Panc1 (cell line): ENCODE measurements at regions of chr2 and their contacts with region 1.

Region 1: DNA sequence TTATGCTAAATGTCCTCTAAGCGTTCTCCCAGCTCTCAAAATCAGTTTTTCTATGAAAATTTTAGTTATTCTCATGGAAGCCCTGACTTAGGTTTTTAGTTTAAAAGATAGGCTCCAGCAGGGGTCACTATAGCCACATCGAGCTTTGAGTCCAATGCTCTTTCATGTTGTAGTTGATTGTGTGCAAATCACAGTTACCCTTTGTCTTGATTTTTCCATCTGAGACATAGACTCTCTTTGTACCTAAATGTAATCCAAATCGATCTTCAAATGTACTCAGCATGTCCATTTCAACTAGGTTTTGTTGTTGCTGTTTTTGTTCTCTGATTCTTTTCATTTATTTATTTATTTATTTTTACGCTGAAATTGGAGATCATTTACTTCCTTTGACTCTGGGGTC is 26.4 kb upstream of the MSTN start:
- DNase-seq: peak; percentile 30
- ATAC-seq: peak; percentile 75
- H3K4me3 ChIP-seq: no peak overlapping the region
- H3K27ac ChIP-seq: no peak overlapping the region
- H3K4me1 ChIP-seq: no peaks in the 10 kb centered on the region
- H3K27me3 ChIP-seq: no peaks in the 10 kb centered on the region
- CTCF ChIP-seq: peak; percentile 77; the same call in 1 of the 2 replicates

Region 2: GRCh38 chr2:189798312-189799029 is 290.4 kb before region 1 on chr2:
- CTCF ChIA-PET with region 1: interaction called, 12 read pairs
- POLR2A ChIA-PET with region 1: no interaction called
- in situ Hi-C with region 1: no loop called
- intact Hi-C with region 1: no loop called
- DNase-seq: no peak
- ATAC-seq: no peak; the same call in 1 of the 2 replicates
- H3K4me3 ChIP-seq: no peak overlapping the region
- H3K27ac ChIP-seq: peak overlapping the region; percentile 54; the same call in 1 of the 2 replicates
- H3K4me1 ChIP-seq: peaks cover 4% of the 10 kb centered on the region; the same call in 1 of the 2 replicates
- H3K27me3 ChIP-seq: no peaks in the 10 kb centered on the region
- CTCF ChIP-seq: peak; percentile 66; the same call in 1 of the 2 replicates

Region 3: DNA sequence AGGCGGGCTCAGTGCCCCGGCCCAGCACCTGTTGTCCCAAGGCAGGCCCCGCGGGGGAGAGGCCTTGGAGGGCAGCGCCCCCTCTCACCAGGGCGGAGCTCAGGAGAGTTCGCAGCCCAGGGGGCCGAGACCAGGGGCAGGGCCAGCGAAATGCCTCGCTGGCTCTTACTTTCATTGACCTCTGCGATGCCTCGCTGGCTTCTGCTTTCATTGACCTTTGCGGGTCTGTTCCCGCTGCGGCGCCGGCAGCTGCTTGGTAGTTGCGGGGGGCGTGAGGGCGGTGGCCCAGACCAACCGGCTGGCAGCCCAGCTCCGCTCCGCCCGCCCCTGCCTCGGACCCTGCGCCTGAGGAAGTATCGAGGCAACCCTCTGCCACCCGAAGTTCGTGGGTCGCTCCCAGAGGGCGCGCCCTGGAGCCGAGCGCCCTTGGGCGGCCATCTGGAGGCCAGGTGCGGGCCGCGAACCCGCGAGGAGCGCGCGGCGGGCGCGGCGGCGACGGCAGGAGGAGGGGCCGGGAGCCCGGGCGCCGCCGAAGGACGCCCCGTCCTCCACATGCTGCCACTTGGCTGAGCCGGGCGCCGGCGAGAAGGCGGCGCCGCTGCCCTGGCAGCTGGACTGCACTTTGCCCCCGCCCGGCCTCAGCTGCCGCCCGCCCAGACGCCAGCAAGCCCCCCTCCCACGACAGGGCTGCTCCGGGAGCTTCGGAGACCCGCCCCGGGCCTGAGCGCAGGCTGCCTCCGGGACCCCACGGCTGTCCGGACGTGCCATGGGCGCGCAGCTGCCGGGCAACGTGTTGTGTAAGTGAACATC is 91.6 kb after region 1 on chr2:
- CTCF ChIA-PET with region 1: no interaction called
- POLR2A ChIA-PET with region 1: no interaction called
- in situ Hi-C with region 1: no loop called
- intact Hi-C with region 1: loop called (anchors 5 kb)
- DNase-seq: no peak
- ATAC-seq: peak; percentile 92
- H3K4me3 ChIP-seq: peak overlapping the region; percentile 54 to 58
- H3K27ac ChIP-seq: no peak overlapping the region
- H3K4me1 ChIP-seq: peaks cover 4% of the 10 kb centered on the region; the same call in 1 of the 2 replicates
- H3K27me3 ChIP-seq: no peaks in the 10 kb centered on the region; the same call in 1 of the 2 replicates
- CTCF ChIP-seq: peak; percentile 82

Region 4: GRCh38 chr2:190277234-190278112 is 188.6 kb after region 1 on chr2:
- CTCF ChIA-PET with region 1: no interaction called
- POLR2A ChIA-PET with region 1: no interaction called
- in situ Hi-C with region 1: no loop called
- intact Hi-C with region 1: loop called (anchors 5 kb)
- DNase-seq: no peak
- ATAC-seq: peak; percentile 38; the same call in 1 of the 2 replicates
- H3K4me3 ChIP-seq: no peak overlapping the region
- H3K27ac ChIP-seq: no peak overlapping the region
- H3K4me1 ChIP-seq: no peaks in the 10 kb centered on the region
- H3K27me3 ChIP-seq: no peaks in the 10 kb centered on the region
- CTCF ChIP-seq: peak; percentile 57; the same call in 1 of the 2 replicates

Region 5: GRCh38 chr2:190313880-190314279 is 225.0 kb after region 1 on chr2:
- CTCF ChIA-PET with region 1: no interaction called
- POLR2A ChIA-PET with region 1: no interaction called
- in situ Hi-C with region 1: no loop called
- intact Hi-C with region 1: loop called (anchors 1 kb)
- DNase-seq: no peak
- ATAC-seq: no peak
- H3K4me3 ChIP-seq: no peak overlapping the region
- H3K27ac ChIP-seq: no peak overlapping the region
- H3K4me1 ChIP-seq: peaks cover 16% of the 10 kb centered on the region
- H3K27me3 ChIP-seq: no peaks in the 10 kb centered on the region
- CTCF ChIP-seq: no peak

Region 6: DNA sequence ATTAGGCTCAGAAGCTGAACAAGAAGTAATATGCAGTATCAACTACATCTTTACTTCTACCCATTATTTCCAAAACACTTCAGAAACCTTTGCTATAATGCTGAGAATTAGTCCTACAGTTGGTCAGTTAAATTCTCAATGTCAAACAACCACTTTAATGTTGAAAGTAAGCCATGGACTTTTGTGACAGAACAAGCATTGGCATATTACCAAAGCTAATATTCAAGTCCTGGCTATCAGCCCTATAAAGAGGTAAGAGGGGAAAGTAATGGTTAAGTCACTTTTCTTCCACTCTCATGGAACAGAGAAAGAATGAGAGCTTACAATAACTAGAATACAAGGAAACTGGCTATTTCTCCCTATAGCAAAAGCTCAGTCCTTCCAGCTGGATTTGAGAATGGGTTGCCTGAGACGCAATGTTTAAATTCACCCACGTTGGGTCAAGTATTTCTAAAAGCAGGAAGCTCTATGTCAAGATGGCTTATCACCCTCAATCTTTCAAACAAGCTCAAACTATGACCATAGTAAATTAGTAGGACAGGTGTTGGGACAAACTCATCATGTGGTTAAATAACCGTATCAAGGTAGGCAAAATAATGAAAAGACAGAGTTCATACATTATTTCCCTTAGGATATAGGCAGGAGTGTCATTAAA is 287.8 kb after region 1 on chr2:
- CTCF ChIA-PET with region 1: no interaction called
- POLR2A ChIA-PET with region 1: no interaction called
- in situ Hi-C with region 1: no loop called
- intact Hi-C with region 1: loop called (anchors 2 kb)
- DNase-seq: no peak
- ATAC-seq: no peak
- H3K4me3 ChIP-seq: no peak overlapping the region
- H3K27ac ChIP-seq: no peak overlapping the region
- H3K4me1 ChIP-seq: no peaks in the 10 kb centered on the region
- H3K27me3 ChIP-seq: no peaks in the 10 kb centered on the region
- CTCF ChIP-seq: no peak

Region 7: DNA sequence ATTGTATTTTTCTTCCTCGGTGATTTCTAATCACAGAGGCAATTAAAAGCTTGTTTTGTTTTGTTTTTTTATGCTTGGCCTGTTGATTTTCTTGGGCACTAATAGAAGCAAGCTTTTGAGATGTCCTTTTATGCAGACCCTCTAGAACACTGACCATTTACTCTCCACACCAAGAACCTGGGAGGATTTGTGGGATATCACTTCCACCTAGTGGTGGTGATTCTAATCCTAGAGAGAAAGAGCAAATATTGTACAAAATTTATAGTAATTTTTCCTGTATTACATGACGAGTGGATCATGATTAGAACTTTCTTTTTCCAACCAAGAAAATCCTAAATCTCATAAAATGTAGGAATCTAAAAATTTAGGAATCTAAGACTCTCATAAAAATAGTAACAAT is 422.2 kb after region 1 on chr2:
- CTCF ChIA-PET with region 1: no interaction called
- POLR2A ChIA-PET with region 1: no interaction called
- in situ Hi-C with region 1: no loop called
- intact Hi-C with region 1: loop called (anchors 10 kb)
- DNase-seq: no peak
- ATAC-seq: no peak
- H3K4me3 ChIP-seq: no peak overlapping the region
- H3K27ac ChIP-seq: no peak overlapping the region
- H3K4me1 ChIP-seq: no peaks in the 10 kb centered on the region
- H3K27me3 ChIP-seq: no peaks in the 10 kb centered on the region
- CTCF ChIP-seq: peak; percentile 39; the same call in 1 of the 2 replicates